CD4-positive, alpha-beta T cell (primary cell): ENCODE measurements at regions of chr5 and their contacts with region 1.

Region 1: GRCh38 chr5:139403787-139404483 is at the start of gene SPATA24:
- DNase-seq: peak; percentile 95 to 99 (median 98)
- ATAC-seq: peak; percentile 85
- H3K4me3 ChIP-seq: peak within 1 kb of the TSS; percentile 71
- H3K4me3 Mint-ChIP-seq: peak within 1 kb of the TSS; percentile 92
- H3K27ac ChIP-seq: peak within 1 kb of the TSS; percentile 74 to 97
- H3K27ac Mint-ChIP-seq: peak within 1 kb of the TSS; percentile 94
- H3K4me1 ChIP-seq: peaks cover 21% of the 10 kb centered on the region
- H3K4me1 Mint-ChIP-seq: peaks cover 35% of the 10 kb centered on the region
- H3K27me3 ChIP-seq: no peaks in the 10 kb centered on the region
- H3K27me3 Mint-ChIP-seq: no peaks in the 10 kb centered on the region
- CTCF ChIP-seq: no peak
- total RNA-seq, gene SPATA24: 3.0 to 3.9 TPM

Region 2: GRCh38 chr5:138331449-138332368 is 1072.2 kb before region 1 on chr5 and contains the start of gene CDC25C:
- CTCF ChIA-PET with region 1: no interaction called
- POLR2A ChIA-PET with region 1: no interaction called
- intact Hi-C with region 1: loop called in 1 of 2 experiments (anchors 10 kb)
- DNase-seq: peak; percentile 92 to 99 (median 95)
- ATAC-seq: peak; percentile 99
- H3K4me3 ChIP-seq: peak within 1 kb of the TSS; percentile 68
- H3K4me3 Mint-ChIP-seq: peak within 1 kb of the TSS; percentile 83
- H3K27ac ChIP-seq: no peak within 1 kb of the TSS
- H3K27ac Mint-ChIP-seq: peak within 1 kb of the TSS; percentile 40
- H3K4me1 ChIP-seq: peaks cover 13% of the 10 kb centered on the region
- H3K4me1 Mint-ChIP-seq: peaks cover 8% of the 10 kb centered on the region
- H3K27me3 ChIP-seq: no peaks in the 10 kb centered on the region
- H3K27me3 Mint-ChIP-seq: no peaks in the 10 kb centered on the region
- CTCF ChIP-seq: no peak
- total RNA-seq, gene CDC25C: not detected

Region 3: GRCh38 chr5:139204196-139204595 is 199.7 kb before region 1 on chr5:
- CTCF ChIA-PET with region 1: no interaction called
- POLR2A ChIA-PET with region 1: no interaction called
- intact Hi-C with region 1: loop called in 1 of 2 experiments (anchors 5 kb)
- DNase-seq: no peak
- ATAC-seq: no peak
- H3K4me3 ChIP-seq: no peak overlapping the region
- H3K4me3 Mint-ChIP-seq: no peak overlapping the region
- H3K27ac ChIP-seq: no peak overlapping the region
- H3K27ac Mint-ChIP-seq: no peak overlapping the region
- H3K4me1 ChIP-seq: no peaks in the 10 kb centered on the region
- H3K4me1 Mint-ChIP-seq: no peaks in the 10 kb centered on the region
- H3K27me3 ChIP-seq: no peaks in the 10 kb centered on the region
- H3K27me3 Mint-ChIP-seq: no peaks in the 10 kb centered on the region
- CTCF ChIP-seq: no peak

Region 4: DNA sequence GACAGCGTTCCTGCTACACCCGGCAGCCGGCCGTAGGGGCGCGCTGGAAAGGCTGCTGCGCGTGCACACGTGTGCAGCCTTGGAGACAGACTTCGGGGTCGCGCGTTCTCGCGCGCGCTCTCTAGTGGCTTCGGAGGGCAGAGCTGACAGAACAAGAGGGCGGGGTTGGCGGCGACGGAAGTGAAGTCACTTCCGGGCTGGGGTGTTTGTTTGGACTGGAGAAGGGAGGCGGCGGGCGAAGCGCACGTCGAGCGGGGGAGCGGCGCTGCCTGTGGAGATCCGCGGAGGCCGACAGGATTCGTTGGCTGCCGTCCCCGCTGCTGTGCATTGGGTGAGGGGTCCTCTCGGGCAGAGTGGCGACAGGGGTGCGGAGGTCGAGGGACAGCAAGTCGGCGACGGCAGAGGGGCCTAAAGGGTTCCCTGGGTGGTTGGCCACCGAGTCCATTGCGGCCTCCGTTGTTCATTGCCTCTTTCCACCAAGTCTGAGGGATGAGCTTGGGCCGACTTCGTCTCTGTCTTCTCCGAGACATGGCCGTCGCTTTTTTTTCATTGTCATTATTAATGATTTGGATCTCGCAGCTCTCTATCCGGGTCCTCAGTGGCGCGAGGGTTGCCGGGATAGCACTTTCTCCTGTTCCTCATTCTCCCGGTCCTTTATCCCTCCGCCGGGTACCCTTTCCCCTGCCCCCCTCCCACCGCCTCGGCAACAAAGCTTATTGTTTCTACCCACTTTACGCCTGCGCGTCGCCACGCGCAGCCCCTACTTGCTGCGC is 62.1 kb before region 1 on chr5 and contains the start of gene PAIP2:
- CTCF ChIA-PET with region 1: interaction called, 10 read pairs
- POLR2A ChIA-PET with region 1: interaction called, 29 read pairs
- intact Hi-C with region 1: loop called in 1 of 2 experiments (anchors 2 kb)
- DNase-seq: peak; percentile 95 to 99 (median 97)
- ATAC-seq: peak; percentile 82
- H3K4me3 ChIP-seq: peak within 1 kb of the TSS; percentile 94
- H3K4me3 Mint-ChIP-seq: peak within 1 kb of the TSS; percentile 96
- H3K27ac ChIP-seq: peak within 1 kb of the TSS; percentile 100
- H3K27ac Mint-ChIP-seq: peak within 1 kb of the TSS; percentile 95
- H3K4me1 ChIP-seq: peaks cover 34% of the 10 kb centered on the region
- H3K4me1 Mint-ChIP-seq: peaks cover 65% of the 10 kb centered on the region
- H3K27me3 ChIP-seq: no peaks in the 10 kb centered on the region
- H3K27me3 Mint-ChIP-seq: no peaks in the 10 kb centered on the region
- CTCF ChIP-seq: peak; percentile 70
- total RNA-seq, gene PAIP2: 151 to 156 TPM

Region 5: GRCh38 chr5:139439013-139439903 is 35.3 kb after region 1 on chr5 and contains the start of gene DNAJC18:
- CTCF ChIA-PET with region 1: no interaction called
- POLR2A ChIA-PET with region 1: interaction called, 7 read pairs
- intact Hi-C with region 1: loop called in 1 of 2 experiments (anchors 2 kb)
- DNase-seq: peak; percentile 79 to 94 (median 88)
- ATAC-seq: peak; percentile 81
- H3K4me3 ChIP-seq: peak within 1 kb of the TSS; percentile 89
- H3K4me3 Mint-ChIP-seq: peak within 1 kb of the TSS; percentile 98
- H3K27ac ChIP-seq: peak within 1 kb of the TSS; percentile 95 to 99
- H3K27ac Mint-ChIP-seq: peak within 1 kb of the TSS; percentile 96
- H3K4me1 ChIP-seq: peaks cover 31% of the 10 kb centered on the region
- H3K4me1 Mint-ChIP-seq: peaks cover 51% of the 10 kb centered on the region
- H3K27me3 ChIP-seq: no peaks in the 10 kb centered on the region
- H3K27me3 Mint-ChIP-seq: no peaks in the 10 kb centered on the region
- CTCF ChIP-seq: no peak
- total RNA-seq, gene DNAJC18: 7.5 to 8.7 TPM

Region 6: GRCh38 chr5:139474890-139475791 is 71.2 kb after region 1 on chr5:
- CTCF ChIA-PET with region 1: no interaction called
- POLR2A ChIA-PET with region 1: no interaction called
- intact Hi-C with region 1: no loop called
- DNase-seq: peak in 5 of 14 experiments; percentile 24 to 75 (median 55)
- ATAC-seq: peak; percentile 65
- H3K4me3 ChIP-seq: peak overlapping the region; percentile 7
- H3K4me3 Mint-ChIP-seq: peak overlapping the region; percentile 81
- H3K27ac ChIP-seq: peak overlapping the region in 1 of 2 donors; percentile 32
- H3K27ac Mint-ChIP-seq: peak overlapping the region; percentile 92
- H3K4me1 ChIP-seq: peaks cover 98% of the 10 kb centered on the region
- H3K4me1 Mint-ChIP-seq: peaks cover 82% of the 10 kb centered on the region
- H3K27me3 ChIP-seq: no peaks in the 10 kb centered on the region
- H3K27me3 Mint-ChIP-seq: no peaks in the 10 kb centered on the region
- CTCF ChIP-seq: no peak

Region 7: GRCh38 chr5:139560752-139561654 is 157.1 kb after region 1 on chr5 and contains the start of gene UBE2D2:
- CTCF ChIA-PET with region 1: no interaction called
- POLR2A ChIA-PET with region 1: interaction called, 5 read pairs
- intact Hi-C with region 1: loop called in 1 of 2 experiments (anchors 5 kb)
- DNase-seq: peak; percentile 96 to 100 (median 98)
- ATAC-seq: peak; percentile 78
- H3K4me3 ChIP-seq: peak within 1 kb of the TSS; percentile 79
- H3K4me3 Mint-ChIP-seq: peak within 1 kb of the TSS; percentile 99
- H3K27ac ChIP-seq: peak within 1 kb of the TSS; percentile 85 to 88
- H3K27ac Mint-ChIP-seq: peak within 1 kb of the TSS; percentile 92
- H3K4me1 ChIP-seq: peaks cover 36% of the 10 kb centered on the region
- H3K4me1 Mint-ChIP-seq: peaks cover 44% of the 10 kb centered on the region
- H3K27me3 ChIP-seq: no peaks in the 10 kb centered on the region
- H3K27me3 Mint-ChIP-seq: no peaks in the 10 kb centered on the region
- CTCF ChIP-seq: no peak
- total RNA-seq, gene UBE2D2: 164 to 174 TPM

Region 8: GRCh38 chr5:140113699-140114263 is 709.8 kb after region 1 on chr5 and contains the start of gene PURA:
- CTCF ChIA-PET with region 1: no interaction called
- POLR2A ChIA-PET with region 1: no interaction called
- intact Hi-C with region 1: loop called in 1 of 2 experiments (anchors 10 kb)
- DNase-seq: peak; percentile 95 to 98 (median 97)
- ATAC-seq: peak; percentile 93
- H3K4me3 ChIP-seq: peak within 1 kb of the TSS; percentile 84
- H3K4me3 Mint-ChIP-seq: peak within 1 kb of the TSS; percentile 100
- H3K27ac ChIP-seq: peak within 1 kb of the TSS; percentile 82 to 83
- H3K27ac Mint-ChIP-seq: peak within 1 kb of the TSS; percentile 96
- H3K4me1 ChIP-seq: peaks cover 40% of the 10 kb centered on the region
- H3K4me1 Mint-ChIP-seq: peaks cover 90% of the 10 kb centered on the region
- H3K27me3 ChIP-seq: peaks cover 8 to 10% of the 10 kb centered on the region in 2 experiments
- H3K27me3 Mint-ChIP-seq: peaks cover 6% of the 10 kb centered on the region
- CTCF ChIP-seq: no peak
- total RNA-seq, gene PURA: 7.0 to 7.9 TPM